CD8-positive, alpha-beta T cell (primary cell): ENCODE measurements at regions of chr17 and their contacts with region 1.

Region 1: GRCh38 chr17:42019509-42020404 is at the start of gene NKIRAS2:
- DNase-seq: peak; percentile 82 to 94 (median 94)
- ATAC-seq: peak; percentile 80
- H3K4me3 ChIP-seq: peak within 1 kb of the TSS; percentile 69 to 83
- H3K4me3 Mint-ChIP-seq: peak within 1 kb of the TSS; percentile 97
- H3K27ac ChIP-seq: peak within 1 kb of the TSS; percentile 34 to 76
- H3K27ac Mint-ChIP-seq: peak within 1 kb of the TSS; percentile 87
- H3K4me1 ChIP-seq: peaks cover 48% of the 10 kb centered on the region
- H3K4me1 Mint-ChIP-seq: peaks cover 62% of the 10 kb centered on the region
- H3K27me3 ChIP-seq: no peaks in the 10 kb centered on the region
- H3K27me3 Mint-ChIP-seq: no peaks in the 10 kb centered on the region
- CTCF ChIP-seq: peak; percentile 91
- total RNA-seq, gene NKIRAS2: 13.2 to 14.8 TPM

Region 2: GRCh38 chr17:40818733-40819527 is 1200.8 kb before region 1 on chr17:
- CTCF ChIA-PET with region 1: no interaction called
- POLR2A ChIA-PET with region 1: interaction called, 3 read pairs
- intact Hi-C with region 1: loop called in 1 of 2 experiments (anchors 5 kb)
- DNase-seq: peak; percentile 70 to 94 (median 85)
- ATAC-seq: peak; percentile 76
- H3K4me3 ChIP-seq: peak overlapping the region; percentile 69 to 77
- H3K4me3 Mint-ChIP-seq: peak overlapping the region; percentile 91
- H3K27ac ChIP-seq: peak overlapping the region; percentile 70 to 79
- H3K27ac Mint-ChIP-seq: peak overlapping the region; percentile 95
- H3K4me1 ChIP-seq: peaks cover 17% of the 10 kb centered on the region
- H3K4me1 Mint-ChIP-seq: peaks cover 26% of the 10 kb centered on the region
- H3K27me3 ChIP-seq: peaks cover 0 to 3% of the 10 kb centered on the region in 2 experiments
- H3K27me3 Mint-ChIP-seq: peaks cover 10% of the 10 kb centered on the region
- CTCF ChIP-seq: no peak

Region 3: GRCh38 chr17:41930009-41930832 is 89.5 kb before region 1 on chr17 and contains the start of gene ODAD4:
- CTCF ChIA-PET with region 1: interaction called, 3 read pairs
- POLR2A ChIA-PET with region 1: no interaction called
- intact Hi-C with region 1: loop called (anchors 1 to 2 kb)
- DNase-seq: peak; percentile 93 to 99 (median 97)
- ATAC-seq: peak; percentile 99
- H3K4me3 ChIP-seq: peak within 1 kb of the TSS; percentile 61 to 73
- H3K4me3 Mint-ChIP-seq: peak within 1 kb of the TSS; percentile 94
- H3K27ac ChIP-seq: peak within 1 kb of the TSS; percentile 88 to 92
- H3K27ac Mint-ChIP-seq: peak within 1 kb of the TSS; percentile 93
- H3K4me1 ChIP-seq: peaks cover 12% of the 10 kb centered on the region
- H3K4me1 Mint-ChIP-seq: peaks cover 23% of the 10 kb centered on the region
- H3K27me3 ChIP-seq: no peaks in the 10 kb centered on the region
- H3K27me3 Mint-ChIP-seq: no peaks in the 10 kb centered on the region
- CTCF ChIP-seq: peak; percentile 62
- total RNA-seq, gene ODAD4: 1.1 to 1.6 TPM

Region 4: DNA sequence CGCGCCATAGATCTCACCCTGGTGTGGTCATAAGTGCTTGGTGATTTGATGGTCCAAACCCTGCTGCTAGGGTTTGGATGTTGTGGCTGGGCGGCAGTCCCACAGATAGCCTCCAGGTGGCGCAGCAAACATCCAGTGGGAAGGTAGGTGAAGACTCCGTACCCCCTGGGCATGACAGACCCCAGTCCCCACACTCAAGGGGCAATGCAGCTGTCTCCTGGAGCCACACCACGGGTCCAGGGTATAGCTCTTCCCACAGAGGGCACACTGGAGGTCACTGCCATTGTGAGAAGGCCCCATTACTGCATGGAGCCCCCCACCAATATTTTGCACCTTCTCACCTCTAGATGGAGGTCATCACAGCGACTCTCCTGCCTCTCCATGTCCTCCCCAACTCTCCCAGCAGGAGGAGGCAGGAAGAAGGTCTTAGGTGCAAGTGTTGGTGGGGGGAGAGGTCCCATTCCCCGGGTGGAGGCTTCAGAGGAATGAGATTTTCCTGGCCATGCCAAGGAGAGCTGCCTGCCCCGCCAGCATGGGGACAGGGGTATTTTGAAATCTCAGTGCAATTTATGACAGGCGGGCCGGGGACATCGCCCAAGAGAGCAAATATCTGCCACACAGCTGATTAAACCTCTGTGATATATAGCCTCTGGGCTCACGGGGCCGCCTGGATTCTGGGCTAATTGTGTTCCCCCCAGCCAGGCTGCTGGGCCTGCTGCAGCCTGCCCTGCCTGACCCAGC is 47.8 kb after region 1 on chr17:
- CTCF ChIA-PET with region 1: interaction called, 17 read pairs
- POLR2A ChIA-PET with region 1: no interaction called
- intact Hi-C with region 1: loop called in 1 of 2 experiments (anchors 2 kb)
- DNase-seq: peak; percentile 49 to 80 (median 71)
- ATAC-seq: peak; percentile 50
- H3K4me3 ChIP-seq: no peak overlapping the region
- H3K4me3 Mint-ChIP-seq: no peak overlapping the region
- H3K27ac ChIP-seq: no peak overlapping the region
- H3K27ac Mint-ChIP-seq: no peak overlapping the region
- H3K4me1 ChIP-seq: peaks cover 35% of the 10 kb centered on the region
- H3K4me1 Mint-ChIP-seq: peaks cover 31% of the 10 kb centered on the region
- H3K27me3 ChIP-seq: peaks cover 0 to 8% of the 10 kb centered on the region in 2 experiments
- H3K27me3 Mint-ChIP-seq: peaks cover 6% of the 10 kb centered on the region
- CTCF ChIP-seq: peak; percentile 87

Region 5: DNA sequence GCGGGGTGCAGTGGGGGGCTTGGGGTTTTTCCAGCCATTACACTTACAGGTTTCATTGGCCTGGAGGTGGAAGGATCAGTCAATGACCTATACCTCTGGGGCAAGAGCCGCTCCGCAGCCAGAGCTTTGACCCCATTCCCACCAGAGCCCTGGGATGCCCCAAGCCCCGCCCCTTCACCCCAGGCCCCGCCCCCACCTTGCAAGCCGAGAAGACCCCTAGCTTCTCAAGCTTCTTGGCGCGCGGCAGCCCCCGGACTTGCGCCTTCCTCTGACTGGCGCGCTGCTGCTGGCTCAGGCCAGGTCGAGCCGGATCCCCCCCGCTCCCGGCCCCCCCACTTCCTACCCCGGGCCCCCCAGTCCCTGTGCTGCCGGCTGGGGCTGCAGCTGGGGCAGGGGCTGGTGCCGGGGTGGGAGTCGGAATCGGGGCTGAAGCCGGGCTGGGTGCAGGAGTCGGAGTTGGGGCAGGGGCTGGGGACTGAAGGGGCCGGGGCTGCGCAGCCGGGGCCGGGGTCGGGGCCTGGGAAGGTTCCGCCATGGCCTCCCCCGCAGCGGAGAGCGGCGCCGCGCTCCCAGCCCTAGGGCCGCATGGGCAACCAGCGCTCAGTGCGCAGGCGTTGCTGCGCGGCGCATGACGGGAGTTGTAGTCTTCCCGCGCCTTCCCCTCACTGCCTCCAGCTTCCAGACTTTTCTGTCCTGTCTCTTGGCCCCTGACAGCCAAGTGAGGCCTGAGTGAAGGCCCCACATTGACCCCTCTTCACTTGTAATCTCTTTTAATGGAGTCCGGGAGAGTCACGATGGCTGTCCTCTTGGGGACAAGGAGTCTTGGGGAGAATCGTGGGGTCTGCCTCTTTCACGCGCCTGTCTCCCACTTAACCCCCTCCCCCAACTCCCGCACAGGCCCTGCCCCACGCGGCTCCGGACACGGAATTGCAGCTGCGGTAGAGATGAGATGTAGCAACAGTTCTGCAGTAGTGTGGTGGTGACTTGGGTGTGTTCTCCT is 101.3 kb after region 1 on chr17 and contains the start of gene KAT2A:
- CTCF ChIA-PET with region 1: interaction called, 256 read pairs
- POLR2A ChIA-PET with region 1: interaction called, 9 read pairs
- intact Hi-C with region 1: loop called in 1 of 2 experiments (anchors 1 kb)
- DNase-seq: peak; percentile 52 to 89 (median 75)
- ATAC-seq: peak; percentile 88
- H3K4me3 ChIP-seq: peak within 1 kb of the TSS; percentile 38 to 65
- H3K4me3 Mint-ChIP-seq: peak within 1 kb of the TSS; percentile 76
- H3K27ac ChIP-seq: no peak within 1 kb of the TSS
- H3K27ac Mint-ChIP-seq: no peak within 1 kb of the TSS
- H3K4me1 ChIP-seq: peaks cover 13% of the 10 kb centered on the region
- H3K4me1 Mint-ChIP-seq: peaks cover 22% of the 10 kb centered on the region
- H3K27me3 ChIP-seq: no peaks in the 10 kb centered on the region
- H3K27me3 Mint-ChIP-seq: no peaks in the 10 kb centered on the region
- CTCF ChIP-seq: no peak
- total RNA-seq, gene KAT2A: 39.3 to 42.5 TPM

Region 6: DNA sequence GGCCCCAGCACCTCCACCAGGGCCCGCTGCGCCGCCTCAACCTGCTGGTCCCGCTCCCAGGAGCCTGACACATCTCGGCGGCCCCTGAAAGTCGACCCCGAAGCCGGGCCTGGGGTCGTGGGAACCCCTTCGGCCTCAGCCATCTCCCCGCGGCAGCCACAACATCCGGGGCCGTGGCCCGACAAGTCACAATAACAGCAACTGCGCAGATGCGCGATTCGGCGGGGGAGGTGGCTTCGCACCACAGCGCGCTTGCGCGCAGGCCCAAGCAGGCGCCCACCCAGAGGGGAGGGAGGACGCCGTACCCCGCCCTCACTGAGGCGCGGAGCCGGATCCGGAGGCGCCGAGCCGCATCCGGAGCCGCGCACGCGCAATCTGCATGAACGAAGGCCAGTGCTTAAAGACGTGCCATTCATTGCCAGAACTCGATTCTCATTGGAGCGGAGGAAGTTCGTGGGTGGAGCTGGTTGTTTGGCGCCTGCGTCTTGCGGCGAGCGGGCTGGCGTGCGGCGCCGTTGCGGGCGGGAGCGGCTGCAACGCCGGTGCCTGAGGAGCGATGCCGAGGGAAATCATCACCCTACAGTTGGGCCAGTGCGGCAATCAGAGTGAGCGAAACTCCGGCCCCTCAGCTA is 589.5 kb after region 1 on chr17 and contains the starts of genes RETREG3 and TUBG1:
- CTCF ChIA-PET with region 1: interaction called, 3 read pairs
- POLR2A ChIA-PET with region 1: no interaction called
- intact Hi-C with region 1: loop called in 1 of 2 experiments (anchors 2 kb)
- DNase-seq: peak; percentile 98 to 100 (median 99)
- ATAC-seq: peak; percentile 92
- H3K4me3 ChIP-seq: peak within 1 kb of the TSS; percentile 90 to 94
- H3K4me3 Mint-ChIP-seq: peak within 1 kb of the TSS; percentile 100
- H3K27ac ChIP-seq: peak within 1 kb of the TSS; percentile 90 to 91
- H3K27ac Mint-ChIP-seq: peak within 1 kb of the TSS; percentile 99
- H3K4me1 ChIP-seq: peaks cover 39% of the 10 kb centered on the region
- H3K4me1 Mint-ChIP-seq: peaks cover 48% of the 10 kb centered on the region
- H3K27me3 ChIP-seq: no peaks in the 10 kb centered on the region
- H3K27me3 Mint-ChIP-seq: no peaks in the 10 kb centered on the region
- CTCF ChIP-seq: no peak
- total RNA-seq, gene RETREG3: 59.0 to 59.3 TPM
- total RNA-seq, gene TUBG1: 4.9 to 8.4 TPM